CD8-positive, alpha-beta memory T cell (primary cell): ENCODE measurements at regions of chr12 and their contacts with region 1.

Region 1: GRCh38 chr12:124036674-124037109 is 63.7 kb downstream of the ZNF664 start:
- DNase-seq: peak; percentile 14 to 56 (median 23)
- H3K4me3 ChIP-seq: no peak overlapping the region
- H3K4me3 Mint-ChIP-seq: no peak overlapping the region
- H3K27ac ChIP-seq: no peak overlapping the region
- H3K27ac Mint-ChIP-seq: no peak overlapping the region
- H3K4me1 ChIP-seq: no peaks in the 10 kb centered on the region
- H3K4me1 Mint-ChIP-seq: no peaks in the 10 kb centered on the region
- H3K27me3 ChIP-seq: no peaks in the 10 kb centered on the region
- H3K27me3 Mint-ChIP-seq: peaks cover 4 to 6% of the 10 kb centered on the region in 2 donors

Region 2: GRCh38 chr12:124125203-124125871 is 88.6 kb after region 1 on chr12:
- CTCF ChIA-PET with region 1: no interaction called
- POLR2A ChIA-PET with region 1: no interaction called
- DNase-seq: no peak
- H3K4me3 ChIP-seq: no peak overlapping the region
- H3K4me3 Mint-ChIP-seq: no peak overlapping the region
- H3K27ac ChIP-seq: no peak overlapping the region
- H3K27ac Mint-ChIP-seq: no peak overlapping the region
- H3K4me1 ChIP-seq: no peaks in the 10 kb centered on the region
- H3K4me1 Mint-ChIP-seq: no peaks in the 10 kb centered on the region
- H3K27me3 ChIP-seq: no peaks in the 10 kb centered on the region
- H3K27me3 Mint-ChIP-seq: peaks cover 7 to 28% of the 10 kb centered on the region in 2 donors

Region 3: DNA sequence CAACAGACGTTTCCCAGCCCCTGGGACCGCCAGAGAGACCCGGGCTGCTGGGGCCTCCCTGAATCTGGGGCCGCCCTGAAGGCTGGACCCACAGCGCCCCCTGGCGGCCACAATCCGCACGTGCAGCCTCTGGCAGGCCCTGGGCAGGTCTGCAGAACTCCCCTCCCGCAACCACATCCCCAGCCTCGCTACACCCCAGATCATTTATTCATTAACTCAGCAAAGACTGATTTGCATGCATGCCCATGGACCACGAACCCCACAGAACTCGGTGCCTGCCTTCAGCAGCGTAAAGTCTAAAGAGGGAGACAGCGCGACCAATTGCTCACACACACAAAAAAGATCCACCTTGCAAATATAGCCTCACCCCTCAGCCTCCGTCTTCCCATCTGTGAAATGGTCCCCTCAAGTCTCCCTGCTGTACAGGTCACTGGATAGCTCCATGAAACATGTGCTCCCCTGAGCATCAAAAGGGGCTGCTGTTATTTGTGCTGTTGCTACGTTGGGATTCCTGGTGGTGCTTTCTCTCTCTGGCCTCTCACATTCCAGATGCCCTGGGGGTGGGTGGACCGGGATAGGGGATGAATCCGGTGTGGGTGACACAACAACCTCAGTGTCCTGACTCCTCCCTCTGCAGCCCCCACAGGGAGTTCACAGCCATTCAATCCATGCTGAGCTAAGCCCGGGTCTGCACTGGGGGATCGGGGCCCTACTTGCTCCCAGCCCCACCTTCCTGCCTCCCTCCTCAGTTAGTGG is 730.6 kb after region 1 on chr12:
- CTCF ChIA-PET with region 1: interaction called, 28 read pairs
- POLR2A ChIA-PET with region 1: no interaction called
- DNase-seq: peak; percentile 71 to 86 (median 73)
- H3K4me3 ChIP-seq: no peak overlapping the region
- H3K4me3 Mint-ChIP-seq: no peak overlapping the region
- H3K27ac ChIP-seq: no peak overlapping the region
- H3K27ac Mint-ChIP-seq: peak overlapping the region in 1 of 8 donors; percentile 47
- H3K4me1 ChIP-seq: peaks cover 10% of the 10 kb centered on the region
- H3K4me1 Mint-ChIP-seq: peaks cover 17 to 31% (median 23%) of the 10 kb centered on the region in 3 donors
- H3K27me3 ChIP-seq: no peaks in the 10 kb centered on the region
- H3K27me3 Mint-ChIP-seq: peaks cover 8 to 15% of the 10 kb centered on the region in 2 donors